HEK293 (cell line): ENCODE measurements at regions of chr2 and their contacts with region 1.

Region 1: GRCh38 chr2:118046634-118047210 is 32.9 kb upstream of the CCDC93 start:
- H3K4me3 ChIP-seq: no peak overlapping the region
- H3K27ac ChIP-seq: no peak overlapping the region
- H3K4me1 ChIP-seq: peaks cover 22% of the 10 kb centered on the region
- CTCF ChIP-seq: no peak

Region 2: DNA sequence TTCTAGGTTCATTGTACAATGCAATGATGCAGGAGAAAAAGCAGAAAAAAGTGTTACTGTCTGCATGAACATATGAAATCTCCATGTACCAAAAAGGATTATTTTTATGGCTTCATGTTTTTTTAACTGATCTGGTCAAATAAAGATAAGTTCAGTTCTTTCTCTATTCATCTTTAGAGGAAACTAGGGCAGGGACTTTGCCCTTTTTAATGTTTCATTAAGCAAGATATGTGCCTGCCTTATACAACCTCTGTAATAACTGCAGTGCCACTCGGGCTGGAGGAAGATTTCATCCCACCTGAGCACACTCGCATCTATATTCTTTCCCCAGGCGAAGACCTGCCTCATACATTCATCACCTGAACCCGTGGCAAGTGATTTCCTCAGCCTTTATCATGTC is 390.2 kb before region 1 on chr2:
- CTCF ChIA-PET with region 1: no interaction called
- POLR2A ChIA-PET with region 1: no interaction called
- H3K4me3 ChIP-seq: no peak overlapping the region
- H3K27ac ChIP-seq: no peak overlapping the region
- H3K4me1 ChIP-seq: no peaks in the 10 kb centered on the region
- CTCF ChIP-seq: no peak

Region 3: DNA sequence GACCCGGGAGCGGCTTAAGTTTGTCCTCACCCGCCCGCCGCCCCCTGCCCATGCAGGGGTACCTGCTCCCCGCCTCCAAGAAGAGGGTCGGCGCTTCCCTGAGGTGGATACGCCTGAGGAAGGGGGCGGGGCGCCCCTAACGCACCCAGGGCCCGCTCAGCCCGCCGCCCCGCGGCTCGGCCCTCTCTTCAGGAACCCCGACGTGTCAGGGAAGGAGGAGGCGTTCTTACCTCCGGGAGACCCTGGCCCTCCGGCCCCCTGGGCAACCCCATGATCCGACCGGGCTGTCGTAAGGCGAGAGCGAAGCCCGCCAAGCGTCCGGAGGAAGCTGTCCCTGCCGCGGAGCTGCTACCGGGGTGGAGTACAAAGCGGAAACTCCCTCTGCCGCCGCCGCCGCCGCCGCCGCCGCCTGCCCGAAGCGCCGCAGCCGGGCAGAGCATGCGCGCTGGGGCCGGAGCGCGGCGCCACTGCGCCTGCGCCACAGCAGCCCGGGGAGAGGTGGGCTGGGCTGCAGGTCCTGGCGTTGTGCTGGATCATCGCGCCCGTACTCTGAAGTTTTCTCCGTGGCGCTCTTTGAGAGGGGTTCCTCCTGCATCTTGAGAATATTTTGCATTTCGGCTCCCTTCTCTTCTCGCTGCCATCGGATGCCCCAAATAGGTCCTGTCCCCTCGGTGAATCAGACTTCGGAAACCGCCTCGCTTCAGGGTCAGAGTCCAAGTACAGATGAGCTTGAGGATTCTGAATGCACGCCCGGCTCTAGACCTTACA is 32.8 kb before region 1 on chr2 and contains the start of gene CCDC93:
- CTCF ChIA-PET with region 1: no interaction called
- POLR2A ChIA-PET with region 1: no interaction called
- H3K4me3 ChIP-seq: peak within 1 kb of the TSS; percentile 89
- H3K27ac ChIP-seq: peak within 1 kb of the TSS; percentile 47; the same call in 1 of the 2 replicates
- H3K4me1 ChIP-seq: peaks cover 7% of the 10 kb centered on the region; the same call in 1 of the 2 replicates
- CTCF ChIP-seq: no peak

Region 4: DNA sequence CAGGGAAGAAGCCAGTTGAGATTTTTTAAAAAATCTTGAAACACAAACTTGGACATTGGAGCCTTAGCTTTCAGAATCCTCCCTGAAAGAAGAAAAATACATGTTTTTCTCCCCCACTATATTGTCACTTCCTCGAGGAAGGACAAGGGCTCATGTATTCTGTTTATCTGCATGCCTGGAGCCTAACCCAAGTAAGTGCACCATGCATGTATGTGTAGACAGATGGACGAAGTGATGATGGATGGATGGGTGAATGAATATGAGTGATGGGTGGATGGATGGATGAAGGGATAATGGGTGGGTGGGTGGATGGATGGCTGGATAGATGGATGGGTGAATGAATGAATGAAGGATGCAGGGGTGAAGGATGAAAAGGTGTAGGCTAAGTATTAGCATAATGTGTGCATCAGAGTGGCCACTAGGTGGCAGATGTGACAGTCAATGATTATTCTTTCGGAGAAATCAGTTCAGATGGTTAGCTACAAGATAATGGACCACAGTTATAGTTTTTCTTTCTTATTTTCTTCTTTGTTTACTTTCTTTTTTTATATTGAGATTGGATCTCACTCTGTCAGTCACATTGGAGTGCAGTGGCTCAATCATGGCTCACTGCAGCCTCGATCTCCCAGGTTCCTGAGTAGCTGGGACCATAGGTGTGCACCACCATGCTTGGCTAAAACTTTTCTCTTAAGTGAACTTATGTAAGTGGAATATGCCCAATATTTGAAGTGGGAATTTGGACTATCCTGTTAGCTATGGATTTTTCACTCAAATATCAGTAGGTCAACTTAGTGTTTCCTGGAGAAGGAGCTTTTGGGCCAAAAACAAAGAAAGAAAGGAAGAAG is 14.3 kb before region 1 on chr2:
- CTCF ChIA-PET with region 1: interaction called, 25 read pairs
- POLR2A ChIA-PET with region 1: no interaction called
- H3K4me3 ChIP-seq: no peak overlapping the region
- H3K27ac ChIP-seq: no peak overlapping the region
- H3K4me1 ChIP-seq: no peaks in the 10 kb centered on the region
- CTCF ChIP-seq: peak; percentile 81

Region 5: GRCh38 chr2:118061135-118061955 is 14.6 kb after region 1 on chr2:
- CTCF ChIA-PET with region 1: interaction called, 77 read pairs
- POLR2A ChIA-PET with region 1: interaction called, 3 read pairs
- H3K4me3 ChIP-seq: no peak overlapping the region
- H3K27ac ChIP-seq: no peak overlapping the region
- H3K4me1 ChIP-seq: peaks cover 13% of the 10 kb centered on the region; the same call in 1 of the 2 replicates
- CTCF ChIP-seq: peak; percentile 68

Region 6: GRCh38 chr2:118177884-118178283 is 131.2 kb after region 1 on chr2:
- CTCF ChIA-PET with region 1: interaction called, 10 read pairs
- POLR2A ChIA-PET with region 1: no interaction called
- H3K4me3 ChIP-seq: no peak overlapping the region
- H3K27ac ChIP-seq: no peak overlapping the region
- H3K4me1 ChIP-seq: no peaks in the 10 kb centered on the region
- CTCF ChIP-seq: no peak

Region 7: DNA sequence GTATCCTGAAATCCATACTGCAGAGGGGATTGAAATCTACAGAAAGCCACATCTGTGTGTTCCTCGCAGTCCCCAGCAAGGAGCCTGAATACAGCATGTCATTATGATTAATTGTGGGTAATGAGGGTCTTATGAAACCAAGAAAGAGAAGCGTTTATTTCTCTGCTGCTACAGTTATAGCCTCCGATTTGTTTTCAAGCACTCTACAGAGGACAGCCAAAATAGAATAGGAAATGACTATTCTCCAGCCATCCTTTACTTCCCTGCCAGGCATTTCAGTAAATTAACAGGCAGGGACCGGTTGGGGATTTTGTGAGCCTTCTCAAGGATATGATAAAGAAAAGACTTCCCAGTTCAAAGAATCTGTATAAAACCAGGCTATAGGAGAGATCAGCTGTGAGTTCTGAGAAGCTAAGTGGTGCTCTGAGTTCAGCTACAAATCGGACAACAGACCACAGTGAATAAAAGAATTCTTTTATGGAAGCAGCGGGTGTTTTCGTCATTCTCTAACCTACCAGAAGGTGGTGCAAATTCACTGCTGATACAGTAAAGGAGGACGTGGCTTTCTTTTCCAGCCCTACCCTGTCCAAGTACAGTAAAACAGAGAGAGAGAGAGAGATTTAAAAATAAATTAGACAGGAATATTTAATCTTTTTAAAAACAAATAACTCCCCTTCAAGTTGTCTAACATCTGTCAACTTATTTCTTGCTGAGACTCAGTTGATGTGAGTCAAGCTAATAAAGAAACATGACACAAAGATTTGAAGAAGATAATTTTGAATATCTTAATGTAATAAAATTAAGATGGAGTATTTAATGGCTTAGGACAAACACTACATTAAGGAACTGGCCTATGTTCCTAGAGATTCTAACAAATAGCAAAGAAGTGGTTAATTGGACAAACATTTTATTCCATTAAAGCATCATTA is 175.2 kb after region 1 on chr2:
- CTCF ChIA-PET with region 1: interaction called, 15 read pairs
- POLR2A ChIA-PET with region 1: no interaction called
- H3K4me3 ChIP-seq: no peak overlapping the region
- H3K27ac ChIP-seq: no peak overlapping the region
- H3K4me1 ChIP-seq: no peaks in the 10 kb centered on the region
- CTCF ChIP-seq: peak; percentile 45; the same call in 1 of the 2 replicates

Region 8: GRCh38 chr2:118855451-118856279 is 808.9 kb after region 1 on chr2:
- CTCF ChIA-PET with region 1: interaction called, 10 read pairs
- POLR2A ChIA-PET with region 1: no interaction called
- H3K4me3 ChIP-seq: peak overlapping the region; percentile 37
- H3K27ac ChIP-seq: no peak overlapping the region
- H3K4me1 ChIP-seq: no peaks in the 10 kb centered on the region
- CTCF ChIP-seq: peak; percentile 89